SK-N-SH (cell line): ENCODE measurements at regions of chr11 and their contacts with region 1.

Region 1: GRCh38 chr11:72189461-72190275 is 2.3 kb upstream of the FOLR1 start:
- DNase-seq: peak; percentile 27
- H3K4me3 ChIP-seq: no peak overlapping the region
- H3K27ac ChIP-seq: peak overlapping the region in 1 of 2 experiments; percentile 3; a peak in 1 of 4 replicates
- H3K4me1 ChIP-seq: peaks cover 0 to 12% of the 10 kb centered on the region in 2 experiments; a peak in 1 of 4 replicates
- H3K27me3 ChIP-seq: no peaks in the 10 kb centered on the region
- CTCF ChIP-seq: no peak
- EP300 ChIP-seq: no peak
- RAD21 ChIP-seq: no peak

Region 2: GRCh38 chr11:72157126-72157525 is 32.5 kb before region 1 on chr11:
- CTCF ChIA-PET with region 1: no interaction called
- POLR2A ChIA-PET with region 1: no interaction called
- DNase-seq: no peak
- H3K4me3 ChIP-seq: no peak overlapping the region
- H3K27ac ChIP-seq: no peak overlapping the region
- H3K4me1 ChIP-seq: no peaks in the 10 kb centered on the region
- H3K27me3 ChIP-seq: peaks cover 12% of the 10 kb centered on the region; the same call in 1 of the 2 replicates
- CTCF ChIP-seq: no peak
- EP300 ChIP-seq: no peak
- RAD21 ChIP-seq: no peak

Region 3: DNA sequence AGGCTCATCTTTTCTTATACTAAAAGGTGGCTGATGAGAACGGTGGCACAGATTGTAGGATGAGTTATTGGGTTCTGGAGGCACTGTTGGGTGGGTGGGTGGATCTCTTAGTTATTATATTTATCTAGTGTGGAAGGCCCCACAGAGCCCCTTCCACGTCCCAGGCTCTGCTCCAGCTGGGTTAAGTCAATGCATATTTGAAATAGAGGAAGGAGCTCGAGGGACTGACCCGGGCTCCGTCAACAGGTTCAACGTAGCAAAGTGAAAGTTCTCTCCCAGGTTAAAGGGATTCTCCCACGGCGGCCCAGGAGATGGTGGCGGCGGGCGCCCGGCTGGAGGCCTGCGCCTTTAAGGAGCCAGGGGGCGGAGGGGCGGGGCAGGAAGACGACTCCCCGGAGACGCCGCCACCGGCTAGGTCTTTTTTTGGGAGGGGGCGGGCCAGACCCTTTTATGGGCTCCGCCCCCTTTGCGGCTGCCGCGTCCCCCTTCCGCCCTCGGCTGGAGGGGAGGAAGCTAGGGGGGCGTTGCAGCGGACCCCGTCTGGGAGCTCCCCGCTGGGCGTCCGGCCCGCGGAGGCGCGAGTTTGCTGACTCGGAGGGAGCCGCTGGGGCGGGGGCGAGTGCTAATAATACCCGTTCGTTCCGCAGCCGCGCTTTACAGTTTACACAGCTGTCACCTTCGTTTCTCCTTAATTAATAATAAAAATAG is 33.4 kb after region 1 on chr11:
- CTCF ChIA-PET with region 1: interaction called, 10 read pairs
- POLR2A ChIA-PET with region 1: no interaction called
- DNase-seq: peak; percentile 92
- H3K4me3 ChIP-seq: peak overlapping the region; percentile 96 to 100
- H3K27ac ChIP-seq: peak overlapping the region; percentile 90 to 91
- H3K4me1 ChIP-seq: peaks cover 5 to 31% of the 10 kb centered on the region in 2 experiments; a peak in 3 of 4 replicates
- H3K27me3 ChIP-seq: no peaks in the 10 kb centered on the region
- CTCF ChIP-seq: no peak
- EP300 ChIP-seq: peak in 1 of 2 experiments; percentile 41; a peak in 1 of 4 replicates
- RAD21 ChIP-seq: no peak